ENCODE measurements at regions of chr1 and their contacts with region 1.

Region 1: DNA sequence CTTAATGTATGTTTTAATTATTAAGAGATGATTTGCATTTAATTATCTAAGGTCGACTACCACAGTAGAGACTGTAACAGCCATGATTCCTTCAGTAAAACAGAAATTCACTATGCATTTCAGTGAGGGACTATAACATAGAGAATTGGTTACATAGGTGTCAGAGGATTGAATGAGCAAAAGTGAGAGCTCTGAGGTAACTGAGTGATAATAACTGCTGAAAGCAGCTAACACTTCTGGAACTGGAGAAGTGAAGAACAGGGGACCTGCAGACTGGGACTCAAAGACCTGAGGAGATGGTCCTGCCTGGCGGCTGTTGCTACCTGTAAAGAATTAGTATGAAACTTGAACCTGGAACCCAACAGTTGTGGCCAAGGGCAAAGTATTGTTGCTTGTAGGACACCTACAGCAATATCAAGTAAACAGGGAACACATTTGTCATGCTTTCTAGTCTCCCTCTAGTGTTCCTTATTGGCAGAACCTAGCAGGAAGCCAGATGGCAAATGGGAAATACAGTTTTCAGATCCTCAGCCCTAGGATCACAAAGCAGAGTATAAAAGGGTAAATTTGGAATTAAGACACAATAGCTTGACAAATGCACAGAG is 110.6 kb downstream of the HS2ST1 start:
- DNase-seq: no peak
- H3K4me3 Mint-ChIP-seq: no peak overlapping the region
- H3K27ac Mint-ChIP-seq: no peak overlapping the region
- H3K4me1 Mint-ChIP-seq: peaks cover 15% of the 10 kb centered on the region
- H3K27me3 Mint-ChIP-seq: no peaks in the 10 kb centered on the region

Region 2: GRCh38 chr1:86938450-86938849 is 86.6 kb before region 1 on chr1:
- intact Hi-C with region 1: no loop called
- DNase-seq: no peak
- H3K4me3 Mint-ChIP-seq: no peak overlapping the region
- H3K27ac Mint-ChIP-seq: no peak overlapping the region
- H3K4me1 Mint-ChIP-seq: peaks cover 6% of the 10 kb centered on the region
- H3K27me3 Mint-ChIP-seq: no peaks in the 10 kb centered on the region

Region 3: GRCh38 chr1:87014281-87014680 is 10.8 kb before region 1 on chr1:
- intact Hi-C with region 1: loop called (anchors 1 kb)
- DNase-seq: no peak
- H3K4me3 Mint-ChIP-seq: no peak overlapping the region
- H3K27ac Mint-ChIP-seq: no peak overlapping the region
- H3K4me1 Mint-ChIP-seq: no peaks in the 10 kb centered on the region
- H3K27me3 Mint-ChIP-seq: no peaks in the 10 kb centered on the region

Region 4: DNA sequence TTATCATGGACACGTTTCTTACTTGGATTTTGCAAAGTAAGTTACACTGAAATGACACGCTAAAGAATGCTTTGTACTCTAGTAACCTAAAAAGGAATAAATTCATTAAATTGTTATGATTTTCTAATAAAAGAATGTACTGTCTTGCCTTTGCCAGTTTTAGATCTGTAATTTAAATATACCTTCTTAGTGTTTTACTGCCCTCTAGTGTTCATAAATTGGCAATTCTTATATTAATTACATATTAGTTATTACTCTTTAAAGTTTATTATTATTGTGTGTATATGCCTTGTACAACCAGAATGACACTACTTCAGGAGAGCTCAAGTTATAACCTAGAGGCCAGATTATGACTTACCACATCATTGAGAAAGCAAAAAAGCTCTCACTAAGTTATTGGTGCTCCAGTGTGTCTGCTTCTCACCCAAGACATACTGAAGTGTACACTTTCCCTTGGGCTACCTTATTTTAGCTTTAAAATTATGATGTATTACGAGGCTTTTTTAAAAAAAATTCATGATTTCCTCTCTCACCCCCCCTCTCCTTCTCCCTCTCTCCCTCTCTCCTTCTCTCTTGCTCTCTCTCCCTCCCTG is 59.3 kb after region 1 on chr1:
- intact Hi-C with region 1: loop called (anchors 10 kb)
- DNase-seq: no peak
- H3K4me3 Mint-ChIP-seq: no peak overlapping the region
- H3K27ac Mint-ChIP-seq: no peak overlapping the region
- H3K4me1 Mint-ChIP-seq: peaks cover 22% of the 10 kb centered on the region
- H3K27me3 Mint-ChIP-seq: no peaks in the 10 kb centered on the region